ENCODE measurements at regions of chr10 and their contacts with region 1.

Region 1: DNA sequence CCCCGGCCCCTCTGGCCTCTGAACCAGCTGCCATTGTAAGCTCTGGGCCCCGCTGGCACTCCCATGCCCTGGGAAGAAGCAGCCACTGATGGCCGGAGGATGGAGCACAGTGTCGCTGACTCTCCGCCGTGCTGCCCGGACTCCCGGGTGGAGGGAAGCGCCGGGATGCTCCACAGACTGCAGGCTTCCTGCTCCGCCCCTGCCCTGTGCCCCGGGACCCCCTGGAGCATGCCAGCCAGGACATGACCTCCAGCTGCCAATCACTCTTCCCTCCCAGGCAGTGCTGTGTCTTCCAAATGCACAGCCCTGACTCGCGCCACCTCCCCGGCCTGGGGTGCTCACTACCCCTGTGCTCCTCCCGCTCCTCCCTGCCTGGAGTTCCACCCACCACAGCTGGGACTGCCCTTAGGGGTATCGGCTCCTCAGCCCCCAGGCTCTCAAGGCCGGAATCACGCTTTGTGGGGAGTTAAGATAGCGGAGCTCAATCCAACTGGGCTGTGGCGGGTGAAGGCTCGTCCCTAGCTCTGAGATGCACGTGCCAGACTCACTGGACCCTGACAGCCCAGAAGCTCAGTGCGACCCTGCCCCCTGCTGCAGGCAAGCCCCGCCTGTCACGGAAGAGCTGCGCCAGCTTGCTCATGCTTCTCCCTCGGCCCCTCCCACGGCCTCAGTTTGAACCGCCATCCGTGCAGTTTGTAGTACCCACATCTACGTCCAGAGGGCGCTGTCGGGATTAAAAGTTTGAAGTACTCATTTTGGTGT is 142.3 kb upstream of the TCERG1L start:
- DNase-seq: peak in 2 of 3 donors; percentile 50 to 65
- ATAC-seq: peak; percentile 76 to 86 (median 84)
- H3K4me3 ChIP-seq: peak overlapping the region in 1 of 3 donors; percentile 14
- H3K27ac ChIP-seq: no peak overlapping the region
- H3K4me1 ChIP-seq: peaks cover 0 to 5% (median 0%) of the 10 kb centered on the region in 4 donors
- H3K27me3 ChIP-seq: no peaks in the 10 kb centered on the region
- CTCF ChIP-seq: peak; percentile 71 to 92 (median 88)
- POLR2A ChIP-seq: no peak

Region 2: GRCh38 chr10:131226446-131227162 is 227.2 kb before region 1 on chr10:
- intact Hi-C with region 1: no loop called
- DNase-seq: peak in 1 of 3 donors; percentile 19
- ATAC-seq: no peak
- H3K4me3 ChIP-seq: no peak overlapping the region
- H3K27ac ChIP-seq: no peak overlapping the region
- H3K4me1 ChIP-seq: no peaks in the 10 kb centered on the region
- H3K27me3 ChIP-seq: no peaks in the 10 kb centered on the region
- CTCF ChIP-seq: no peak
- POLR2A ChIP-seq: no peak

Region 3: GRCh38 chr10:131786756-131787605 is 333.2 kb after region 1 on chr10:
- intact Hi-C with region 1: loop called in 1 of 2 experiments (anchors 10 kb)
- DNase-seq: no peak
- ATAC-seq: peak; percentile 49 to 79 (median 72)
- H3K4me3 ChIP-seq: no peak overlapping the region
- H3K27ac ChIP-seq: no peak overlapping the region
- H3K4me1 ChIP-seq: no peaks in the 10 kb centered on the region
- H3K27me3 ChIP-seq: no peaks in the 10 kb centered on the region
- CTCF ChIP-seq: peak; percentile 73 to 87 (median 79)
- POLR2A ChIP-seq: no peak

Region 4: GRCh38 chr10:131846240-131847101 is 392.7 kb after region 1 on chr10:
- intact Hi-C with region 1: loop called in 1 of 2 experiments (anchors 10 kb)
- DNase-seq: no peak
- ATAC-seq: no peak
- H3K4me3 ChIP-seq: no peak overlapping the region
- H3K27ac ChIP-seq: no peak overlapping the region
- H3K4me1 ChIP-seq: no peaks in the 10 kb centered on the region
- H3K27me3 ChIP-seq: no peaks in the 10 kb centered on the region
- CTCF ChIP-seq: no peak
- POLR2A ChIP-seq: no peak